Calu3 (cell line): ENCODE measurements at regions of chr19 and their contacts with region 1.

Region 1: GRCh38 chr19:29596885-29597525 is 9.1 kb upstream of the POP4 start:
- DNase-seq: peak; percentile 24
- H3K4me3 Mint-ChIP-seq: no peak overlapping the region
- H3K27ac Mint-ChIP-seq: no peak overlapping the region
- H3K4me1 Mint-ChIP-seq: no peaks in the 10 kb centered on the region
- H3K27me3 Mint-ChIP-seq: peaks cover 62% of the 10 kb centered on the region
- CTCF ChIP-seq: no peak

Region 2: GRCh38 chr19:29467824-29468401 is 129.1 kb before region 1 on chr19:
- CTCF ChIA-PET with region 1: interaction called, 5 read pairs
- intact Hi-C with region 1: loop called (anchors 5 kb)
- DNase-seq: peak; percentile 40
- H3K4me3 Mint-ChIP-seq: no peak overlapping the region
- H3K27ac Mint-ChIP-seq: no peak overlapping the region
- H3K4me1 Mint-ChIP-seq: no peaks in the 10 kb centered on the region
- H3K27me3 Mint-ChIP-seq: no peaks in the 10 kb centered on the region
- CTCF ChIP-seq: peak; percentile 21